ENCODE measurements at regions of chr9 and their contacts with region 1.

Region 1: DNA sequence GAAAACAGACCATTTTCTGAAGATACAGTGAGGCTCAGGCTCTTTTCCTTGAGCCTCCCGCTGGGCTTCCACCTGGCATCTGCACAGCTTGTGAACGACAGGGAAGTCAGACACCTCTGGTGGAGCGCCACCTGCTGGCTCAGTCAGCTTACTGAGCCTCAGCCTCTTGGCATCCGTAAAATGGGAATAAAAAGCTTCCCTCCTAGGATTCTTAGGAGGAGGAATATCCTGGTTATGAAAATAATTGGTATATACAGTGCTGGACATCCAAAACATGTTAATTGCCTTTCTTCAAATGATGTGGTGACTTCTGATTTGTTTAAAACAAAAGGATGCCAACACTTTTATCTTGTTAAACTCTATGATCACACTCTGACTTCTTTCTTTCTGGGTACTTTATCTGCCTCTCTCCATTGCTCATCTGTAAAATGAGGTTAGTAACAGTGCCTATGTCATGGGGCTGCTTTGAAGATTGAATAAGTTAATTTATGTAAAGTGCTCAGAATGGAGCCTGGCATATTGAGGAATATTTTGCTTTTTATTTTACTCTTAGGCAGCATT is 67.5 kb downstream of the MAMDC2 start:
- DNase-seq: peak; percentile 84 to 89
- H3K4me3 ChIP-seq: no peak overlapping the region
- H3K27ac ChIP-seq: no peak overlapping the region
- H3K4me1 ChIP-seq: peaks cover 0 to 10% (median 7%) of the 10 kb centered on the region in 4 donors
- H3K27me3 ChIP-seq: no peaks in the 10 kb centered on the region
- CTCF ChIP-seq: peak; percentile 87 to 88

Region 2: GRCh38 chr9:69951411-69951810 is 159.7 kb before region 1 on chr9:
- intact Hi-C with region 1: no loop called
- DNase-seq: no peak
- H3K4me3 ChIP-seq: no peak overlapping the region
- H3K27ac ChIP-seq: no peak overlapping the region
- H3K4me1 ChIP-seq: peaks cover 0 to 10% (median 6%) of the 10 kb centered on the region in 4 donors
- H3K27me3 ChIP-seq: no peaks in the 10 kb centered on the region
- CTCF ChIP-seq: no peak

Region 3: GRCh38 chr9:69971643-69972449 is 139.3 kb before region 1 on chr9:
- intact Hi-C with region 1: loop called (anchors 2 kb)
- DNase-seq: peak; percentile 83
- H3K4me3 ChIP-seq: no peak overlapping the region
- H3K27ac ChIP-seq: no peak overlapping the region
- H3K4me1 ChIP-seq: peaks cover 0 to 15% (median 0%) of the 10 kb centered on the region in 4 donors
- H3K27me3 ChIP-seq: no peaks in the 10 kb centered on the region
- CTCF ChIP-seq: peak; percentile 87 to 92

Region 4: GRCh38 chr9:70043689-70044489 is 67.2 kb before region 1 on chr9 and contains the start of gene MAMDC2:
- intact Hi-C with region 1: loop called (anchors 2 kb)
- DNase-seq: peak; percentile 77 to 84
- H3K4me3 ChIP-seq: peak within 1 kb of the TSS; percentile 77 to 82
- H3K27ac ChIP-seq: peak within 1 kb of the TSS; percentile 86 to 89
- H3K4me1 ChIP-seq: peaks cover 0 to 58% (median 41%) of the 10 kb centered on the region in 4 donors
- H3K27me3 ChIP-seq: no peaks in the 10 kb centered on the region
- CTCF ChIP-seq: no peak

Region 5: GRCh38 chr9:70060883-70061507 is 50.1 kb before region 1 on chr9:
- intact Hi-C with region 1: no loop called
- DNase-seq: no peak
- H3K4me3 ChIP-seq: no peak overlapping the region
- H3K27ac ChIP-seq: no peak overlapping the region
- H3K4me1 ChIP-seq: peaks cover 3 to 56% (median 18%) of the 10 kb centered on the region in 4 donors
- H3K27me3 ChIP-seq: no peaks in the 10 kb centered on the region
- CTCF ChIP-seq: no peak

Region 6: GRCh38 chr9:70258692-70259511 is 147.8 kb after region 1 on chr9 and contains the start of gene SMC5:
- intact Hi-C with region 1: loop called (anchors 10 kb)
- DNase-seq: peak; percentile 86 to 95
- H3K4me3 ChIP-seq: peak within 1 kb of the TSS; percentile 65 to 80
- H3K27ac ChIP-seq: peak within 1 kb of the TSS; percentile 93 to 96
- H3K4me1 ChIP-seq: peaks cover 0 to 69% (median 42%) of the 10 kb centered on the region in 4 donors
- H3K27me3 ChIP-seq: no peaks in the 10 kb centered on the region
- CTCF ChIP-seq: no peak

Measured in tibial artery (tissue), 4 donors.